Right ventricle myocardium inferior (tissue), 1 donor: ENCODE measurements at regions of chr20 and their contacts with region 1.

Region 1: GRCh38 chr20:51492167-51493092 is 50.1 kb downstream of the NFATC2 start:
- DNase-seq: peak; percentile 80
- ATAC-seq: peak; percentile 90

Region 2: GRCh38 chr20:51036827-51037531 is 455.5 kb before region 1 on chr20:
- intact Hi-C with region 1: no loop called
- DNase-seq: no peak
- ATAC-seq: no peak

Region 3: GRCh38 chr20:51385646-51386530 is 106.5 kb before region 1 on chr20:
- intact Hi-C with region 1: loop called (anchors 5 kb)
- DNase-seq: no peak
- ATAC-seq: peak; percentile 39

Region 4: GRCh38 chr20:51541189-51542032 is 49.0 kb after region 1 on chr20:
- intact Hi-C with region 1: loop called (anchors 2 kb)
- DNase-seq: peak; percentile 88
- ATAC-seq: peak; percentile 86